CD4-positive, alpha-beta T cell (primary cell): ENCODE measurements at regions of chr4 and their contacts with region 1.

Region 1: DNA sequence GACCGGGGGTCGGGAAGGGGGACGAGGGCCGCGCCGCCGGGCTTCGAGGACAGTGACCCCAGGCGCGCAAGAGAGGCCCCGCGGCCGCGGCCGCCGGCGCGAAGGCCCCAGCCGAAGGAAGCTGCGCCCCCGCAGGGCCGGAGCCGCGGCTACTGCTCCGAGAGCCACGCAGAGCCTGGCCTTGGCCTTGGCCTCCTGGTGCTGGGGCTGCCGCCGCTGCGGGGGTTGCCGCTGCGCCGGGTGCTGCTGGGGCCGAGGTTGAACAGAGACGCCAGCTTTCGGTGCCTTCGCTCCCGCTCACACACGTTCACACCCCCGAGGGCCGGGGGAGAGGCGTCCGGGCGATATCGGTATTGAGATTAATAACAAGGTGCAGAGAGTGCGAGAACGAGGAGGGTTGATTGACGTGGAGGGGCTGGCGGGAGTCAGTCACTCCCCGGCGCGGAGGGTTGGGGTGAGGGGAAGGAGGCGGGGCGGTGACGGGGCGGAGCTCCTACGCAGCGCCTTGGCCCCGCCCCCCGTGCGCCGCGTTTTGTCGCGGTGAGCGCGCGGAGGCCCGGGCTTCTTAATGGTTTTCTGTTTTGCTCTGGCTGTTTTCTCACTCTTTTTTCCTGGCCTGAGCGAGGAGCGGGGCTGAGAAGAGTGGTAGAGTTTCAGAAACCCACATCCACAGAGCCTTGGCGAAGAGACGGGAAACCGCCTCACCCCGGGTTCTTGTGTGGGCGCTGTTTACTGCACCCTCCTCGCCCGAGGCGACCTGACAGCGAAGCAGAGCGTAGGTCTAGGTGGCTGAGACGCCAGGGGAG is 878 bp upstream of the CNOT6L start:
- DNase-seq: peak; percentile 91 to 98 (median 96)
- ATAC-seq: peak; percentile 73
- H3K4me3 ChIP-seq: peak overlapping the region; percentile 60
- H3K4me3 Mint-ChIP-seq: peak overlapping the region; percentile 97
- H3K27ac ChIP-seq: peak overlapping the region; percentile 86 to 98
- H3K27ac Mint-ChIP-seq: peak overlapping the region; percentile 96
- H3K4me1 ChIP-seq: peaks cover 43% of the 10 kb centered on the region
- H3K4me1 Mint-ChIP-seq: peaks cover 71% of the 10 kb centered on the region
- H3K27me3 ChIP-seq: no peaks in the 10 kb centered on the region
- H3K27me3 Mint-ChIP-seq: peaks cover 4% of the 10 kb centered on the region
- CTCF ChIP-seq: no peak

Region 2: DNA sequence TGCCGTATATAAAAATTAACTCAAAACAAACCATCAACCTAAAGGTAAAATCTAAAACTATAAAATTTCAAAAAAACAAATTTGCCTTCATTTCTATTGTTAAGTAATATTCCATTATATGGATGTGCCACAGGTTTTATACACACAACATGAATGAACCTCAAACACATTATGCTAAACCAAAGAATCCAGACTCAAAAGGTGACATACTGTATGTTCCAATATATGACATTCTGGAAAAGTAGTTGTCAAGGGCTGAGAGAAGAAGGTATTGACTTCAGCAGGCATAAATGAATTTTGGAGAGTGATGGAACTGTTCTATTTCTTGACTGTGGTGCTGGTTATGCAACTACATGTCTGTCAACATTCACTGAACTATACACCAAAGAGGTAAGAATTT is 57.5 kb before region 1 on chr4:
- CTCF ChIA-PET with region 1: no interaction called
- POLR2A ChIA-PET with region 1: interaction called, 5 read pairs
- intact Hi-C with region 1: loop called in 1 of 2 experiments (anchors 5 kb)
- DNase-seq: no peak
- ATAC-seq: no peak
- H3K4me3 ChIP-seq: no peak overlapping the region
- H3K4me3 Mint-ChIP-seq: no peak overlapping the region
- H3K27ac ChIP-seq: no peak overlapping the region
- H3K27ac Mint-ChIP-seq: no peak overlapping the region
- H3K4me1 ChIP-seq: no peaks in the 10 kb centered on the region
- H3K4me1 Mint-ChIP-seq: peaks cover 63% of the 10 kb centered on the region
- H3K27me3 ChIP-seq: no peaks in the 10 kb centered on the region
- H3K27me3 Mint-ChIP-seq: no peaks in the 10 kb centered on the region
- CTCF ChIP-seq: no peak

Region 3: GRCh38 chr4:77800483-77801259 is 19.4 kb before region 1 on chr4:
- CTCF ChIA-PET with region 1: interaction called, 3 read pairs
- POLR2A ChIA-PET with region 1: interaction called, 53 read pairs
- intact Hi-C with region 1: loop called (anchors 1 to 2 kb)
- DNase-seq: no peak
- ATAC-seq: peak; percentile 3
- H3K4me3 ChIP-seq: peak overlapping the region; percentile 33
- H3K4me3 Mint-ChIP-seq: peak overlapping the region; percentile 75
- H3K27ac ChIP-seq: peak overlapping the region in 1 of 2 donors; percentile 73
- H3K27ac Mint-ChIP-seq: peak overlapping the region; percentile 77
- H3K4me1 ChIP-seq: peaks cover 33% of the 10 kb centered on the region
- H3K4me1 Mint-ChIP-seq: peaks cover 88% of the 10 kb centered on the region
- H3K27me3 ChIP-seq: no peaks in the 10 kb centered on the region
- H3K27me3 Mint-ChIP-seq: no peaks in the 10 kb centered on the region
- CTCF ChIP-seq: no peak

Region 4: DNA sequence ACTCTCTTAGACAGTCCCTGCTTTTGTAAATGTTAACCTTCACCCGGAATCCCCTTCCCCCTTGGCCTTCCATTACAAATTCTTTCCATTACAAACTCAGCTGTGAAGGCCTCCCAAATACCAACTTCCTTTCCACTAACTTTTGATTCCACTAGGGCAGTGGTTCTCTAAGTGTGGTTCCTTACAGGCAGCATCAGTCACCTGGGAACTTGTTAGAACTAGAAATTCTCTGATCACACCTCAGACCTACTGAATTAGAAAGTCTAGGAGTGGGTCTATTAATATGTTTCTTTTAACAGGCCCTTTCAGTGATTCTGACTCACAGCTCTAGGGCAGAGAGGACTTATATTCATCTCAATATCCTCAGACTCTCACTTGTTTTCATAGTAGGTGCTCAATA is 23.6 kb after region 1 on chr4:
- CTCF ChIA-PET with region 1: no interaction called
- POLR2A ChIA-PET with region 1: interaction called, 1,450 read pairs
- intact Hi-C with region 1: no loop called
- DNase-seq: no peak
- ATAC-seq: no peak
- H3K4me3 ChIP-seq: no peak overlapping the region
- H3K4me3 Mint-ChIP-seq: no peak overlapping the region
- H3K27ac ChIP-seq: no peak overlapping the region
- H3K27ac Mint-ChIP-seq: no peak overlapping the region
- H3K4me1 ChIP-seq: no peaks in the 10 kb centered on the region
- H3K4me1 Mint-ChIP-seq: peaks cover 23% of the 10 kb centered on the region
- H3K27me3 ChIP-seq: no peaks in the 10 kb centered on the region
- H3K27me3 Mint-ChIP-seq: no peaks in the 10 kb centered on the region
- CTCF ChIP-seq: no peak

Region 5: GRCh38 chr4:77862478-77863216 is 42.6 kb after region 1 on chr4 and contains the start of gene MRPL1:
- CTCF ChIA-PET with region 1: interaction called, 34 read pairs
- POLR2A ChIA-PET with region 1: interaction called, 1,450 read pairs
- intact Hi-C with region 1: loop called (anchors 1 kb)
- DNase-seq: peak; percentile 78 to 96 (median 85)
- ATAC-seq: peak; percentile 77
- H3K4me3 ChIP-seq: peak within 1 kb of the TSS; percentile 77
- H3K4me3 Mint-ChIP-seq: peak within 1 kb of the TSS; percentile 91
- H3K27ac ChIP-seq: peak within 1 kb of the TSS; percentile 99
- H3K27ac Mint-ChIP-seq: peak within 1 kb of the TSS; percentile 99
- H3K4me1 ChIP-seq: peaks cover 42% of the 10 kb centered on the region
- H3K4me1 Mint-ChIP-seq: peaks cover 66% of the 10 kb centered on the region
- H3K27me3 ChIP-seq: no peaks in the 10 kb centered on the region
- H3K27me3 Mint-ChIP-seq: peaks cover 7% of the 10 kb centered on the region
- CTCF ChIP-seq: no peak
- total RNA-seq, gene MRPL1: 14.8 to 17.5 TPM